Stomach (tissue), 19 donors: ENCODE measurements at regions of chr12 and their contacts with region 1.

Region 1: DNA sequence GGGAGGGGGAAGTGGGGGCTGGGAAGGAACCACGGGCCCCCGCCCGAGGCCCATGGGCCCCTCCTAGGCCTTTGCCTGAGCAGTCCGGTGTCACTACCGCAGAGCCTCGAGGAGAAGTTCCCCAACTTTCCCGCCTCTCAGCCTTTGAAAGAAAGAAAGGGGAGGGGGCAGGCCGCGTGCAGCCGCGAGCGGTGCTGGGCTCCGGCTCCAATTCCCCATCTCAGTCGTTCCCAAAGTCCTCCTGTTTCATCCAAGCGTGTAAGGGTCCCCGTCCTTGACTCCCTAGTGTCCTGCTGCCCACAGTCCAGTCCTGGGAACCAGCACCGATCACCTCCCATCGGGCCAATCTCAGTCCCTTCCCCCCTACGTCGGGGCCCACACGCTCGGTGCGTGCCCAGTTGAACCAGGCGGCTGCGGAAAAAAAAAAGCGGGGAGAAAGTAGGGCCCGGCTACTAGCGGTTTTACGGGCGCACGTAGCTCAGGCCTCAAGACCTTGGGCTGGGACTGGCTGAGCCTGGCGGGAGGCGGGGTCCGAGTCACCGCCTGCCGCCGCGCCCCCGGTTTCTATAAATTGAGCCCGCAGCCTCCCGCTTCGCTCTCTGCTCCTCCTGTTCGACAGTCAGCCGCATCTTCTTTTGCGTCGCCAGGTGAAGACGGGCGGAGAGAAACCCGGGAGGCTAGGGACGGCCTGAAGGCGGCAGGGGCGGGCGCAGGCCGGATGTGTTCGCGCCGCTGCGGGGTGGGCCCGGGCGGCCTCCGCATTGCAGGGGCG is at the start of gene GAPDH:
- DNase-seq: peak; percentile 90 to 98
- H3K4me3 ChIP-seq: peak within 1 kb of the TSS; percentile 80 to 97 (median 90)
- H3K27ac ChIP-seq: peak within 1 kb of the TSS; percentile 95 to 100 (median 96)
- H3K4me1 ChIP-seq: peaks cover 45 to 64% (median 54%) of the 10 kb centered on the region in 4 donors
- H3K27me3 ChIP-seq: no peaks in the 10 kb centered on the region
- CTCF ChIP-seq: no peak
- EP300 ChIP-seq: no peak
- POLR2A ChIP-seq: peak in 1 of 4 donors; percentile 92
- total RNA-seq, gene GAPDH: 579 to 1,258 (median 1,242) TPM

Region 2: GRCh38 chr12:6323340-6323994 is 210.6 kb before region 1 on chr12:
- intact Hi-C with region 1: loop called (anchors 5 kb)
- DNase-seq: peak; percentile 42 to 85
- H3K4me3 ChIP-seq: peak overlapping the region in 3 of 4 donors; percentile 6 to 17 (median 15)
- H3K27ac ChIP-seq: peak overlapping the region; percentile 62 to 99 (median 95)
- H3K4me1 ChIP-seq: peaks cover 55 to 68% (median 65%) of the 10 kb centered on the region in 4 donors
- H3K27me3 ChIP-seq: no peaks in the 10 kb centered on the region
- CTCF ChIP-seq: peak in 5 of 7 experiments; percentile 18 to 69 (median 52)
- EP300 ChIP-seq: no peak
- POLR2A ChIP-seq: no peak

Region 3: DNA sequence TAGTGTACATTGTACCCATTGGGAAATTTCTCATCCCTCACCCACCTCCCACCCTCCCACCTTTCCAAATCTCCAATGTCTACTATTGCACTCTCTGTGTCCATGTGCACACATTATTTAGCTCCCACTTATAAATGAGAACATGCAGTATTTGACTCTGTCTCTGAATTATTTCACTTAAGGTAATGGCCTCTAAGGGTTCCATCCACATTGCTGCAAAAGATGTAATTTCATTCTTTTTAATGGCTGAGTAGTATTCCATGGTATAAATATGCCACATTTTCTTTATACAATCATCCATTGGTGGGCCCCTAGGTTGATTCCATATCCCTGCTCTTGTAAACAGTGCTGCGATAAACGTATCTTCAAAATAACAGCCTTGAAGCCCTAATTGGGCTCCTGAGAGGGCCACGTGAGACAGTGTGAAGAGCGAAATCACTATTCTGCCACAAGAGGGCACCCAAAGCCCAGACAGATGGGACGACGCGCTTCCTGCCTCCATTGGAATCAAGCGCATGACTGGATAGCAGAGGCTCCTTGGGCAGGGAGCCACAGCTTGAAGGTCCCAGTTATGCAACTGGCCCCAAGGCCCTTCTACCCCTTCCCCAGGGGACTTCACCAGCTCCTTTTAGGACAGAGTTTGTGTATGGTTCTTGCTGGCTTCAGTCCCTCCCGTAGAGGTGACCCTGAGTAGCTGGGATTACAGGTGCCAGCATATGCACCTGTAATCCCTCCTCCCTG is 110.7 kb before region 1 on chr12:
- intact Hi-C with region 1: loop called (anchors 10 kb)
- DNase-seq: peak; percentile 87 to 96
- H3K4me3 ChIP-seq: no peak overlapping the region
- H3K27ac ChIP-seq: peak overlapping the region in 3 of 5 donors; percentile 17 to 58 (median 37)
- H3K4me1 ChIP-seq: peaks cover 8 to 29% (median 15%) of the 10 kb centered on the region in 4 donors
- H3K27me3 ChIP-seq: no peaks in the 10 kb centered on the region
- CTCF ChIP-seq: peak in 5 of 7 experiments; percentile 65 to 95 (median 86)
- EP300 ChIP-seq: no peak
- POLR2A ChIP-seq: no peak

Region 4: GRCh38 chr12:6708960-6709394 is 174.9 kb after region 1 on chr12:
- intact Hi-C with region 1: no loop called
- DNase-seq: no peak
- H3K4me3 ChIP-seq: no peak overlapping the region
- H3K27ac ChIP-seq: no peak overlapping the region
- H3K4me1 ChIP-seq: no peaks in the 10 kb centered on the region
- H3K27me3 ChIP-seq: peaks cover 0 to 94% (median 15%) of the 10 kb centered on the region in 3 donors
- CTCF ChIP-seq: no peak
- EP300 ChIP-seq: no peak
- POLR2A ChIP-seq: no peak